Thyroid gland (tissue), 4 donors: ENCODE measurements at regions of chr1 and their contacts with region 1.

Region 1: GRCh38 chr1:147723691-147724323 is 36.6 kb downstream of the GJA5 start:
- DNase-seq: peak; percentile 42 to 54
- H3K4me3 ChIP-seq: no peak overlapping the region
- H3K27ac ChIP-seq: no peak overlapping the region
- H3K4me1 ChIP-seq: no peaks in the 10 kb centered on the region
- H3K27me3 ChIP-seq: no peaks in the 10 kb centered on the region
- CTCF ChIP-seq: peak in 4 of 6 experiments; percentile 36 to 60 (median 44)
- POLR2A ChIP-seq: no peak

Region 2: DNA sequence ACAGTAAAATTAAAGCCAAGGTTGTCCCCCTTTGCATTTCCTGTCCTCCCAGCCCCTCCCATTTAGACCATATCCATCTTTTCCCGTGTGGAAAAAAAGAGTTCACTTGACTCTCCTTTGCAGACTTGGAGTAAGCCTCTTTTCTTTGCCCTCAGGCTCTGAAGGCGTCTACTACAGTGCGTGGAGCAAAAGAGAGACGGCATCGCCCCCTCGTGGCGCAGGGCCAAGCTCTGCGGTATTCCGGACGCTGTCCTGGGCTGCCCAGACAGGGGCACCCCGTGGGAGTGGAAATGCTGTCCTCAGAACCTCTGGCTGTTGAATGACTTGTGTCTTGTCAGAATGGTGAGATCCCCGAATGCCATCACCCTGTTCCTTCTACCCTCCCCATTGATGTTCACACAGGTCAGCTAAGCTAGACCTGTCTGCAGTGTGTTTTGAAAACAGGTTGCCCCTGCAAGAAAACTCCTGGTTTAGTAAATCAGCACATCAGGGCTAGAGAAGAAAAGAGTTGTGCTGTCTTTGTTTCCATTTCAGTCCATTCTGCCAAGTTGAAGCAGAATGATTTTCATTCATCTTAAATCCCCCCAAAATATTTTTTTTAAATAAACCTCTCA is 166.5 kb after region 1 on chr1:
- intact Hi-C with region 1: loop called (anchors 2 kb)
- DNase-seq: peak; percentile 61 to 73
- H3K4me3 ChIP-seq: no peak overlapping the region
- H3K27ac ChIP-seq: no peak overlapping the region
- H3K4me1 ChIP-seq: no peaks in the 10 kb centered on the region
- H3K27me3 ChIP-seq: no peaks in the 10 kb centered on the region
- CTCF ChIP-seq: peak in 4 of 6 experiments; percentile 33 to 48 (median 44)
- POLR2A ChIP-seq: no peak